Ovary (tissue), 10 donors: ENCODE measurements at regions of chr17 and their contacts with region 1.

Region 1: GRCh38 chr17:40909351-40909750 is 24.3 kb upstream of the KRT20 start:
- DNase-seq: peak; percentile 64 to 84 (median 80)
- H3K4me3 ChIP-seq: no peak overlapping the region
- H3K27ac ChIP-seq: no peak overlapping the region
- H3K4me1 ChIP-seq: no peaks in the 10 kb centered on the region
- H3K27me3 ChIP-seq: no peaks in the 10 kb centered on the region
- CTCF ChIP-seq: peak; percentile 48 to 80 (median 69)
- EP300 ChIP-seq: no peak
- POLR2A ChIP-seq: no peak

Region 2: DNA sequence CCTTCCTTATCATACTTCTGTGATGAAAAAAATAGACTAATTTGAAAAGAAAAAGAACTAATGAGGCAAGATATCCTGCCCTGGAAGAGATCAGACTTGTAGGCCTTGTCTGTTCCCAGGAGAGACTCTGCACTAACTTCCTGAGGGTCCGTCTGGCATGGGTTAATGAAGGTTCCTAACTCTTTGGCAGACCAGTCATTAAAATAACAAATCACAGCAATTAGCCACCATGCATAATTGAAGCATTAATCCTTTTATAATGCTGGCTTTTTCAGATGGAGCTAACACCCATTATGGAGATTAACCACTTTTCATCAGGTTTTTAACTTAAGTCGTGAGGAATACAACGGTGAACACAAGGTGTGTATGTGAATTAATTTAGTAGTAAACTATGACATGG is 76.5 kb before region 1 on chr17:
- intact Hi-C with region 1: no loop called
- DNase-seq: no peak
- H3K4me3 ChIP-seq: no peak overlapping the region
- H3K27ac ChIP-seq: no peak overlapping the region
- H3K4me1 ChIP-seq: no peaks in the 10 kb centered on the region
- H3K27me3 ChIP-seq: no peaks in the 10 kb centered on the region
- CTCF ChIP-seq: no peak
- EP300 ChIP-seq: no peak
- POLR2A ChIP-seq: no peak

Region 3: GRCh38 chr17:41392278-41392677 is 482.9 kb after region 1 on chr17:
- intact Hi-C with region 1: loop called in 1 of 4 experiments (anchors 10 kb)
- DNase-seq: no peak
- H3K4me3 ChIP-seq: no peak overlapping the region
- H3K27ac ChIP-seq: no peak overlapping the region
- H3K4me1 ChIP-seq: peaks cover 14% of the 10 kb centered on the region
- H3K27me3 ChIP-seq: no peaks in the 10 kb centered on the region
- CTCF ChIP-seq: no peak
- EP300 ChIP-seq: no peak
- POLR2A ChIP-seq: no peak

Region 4: DNA sequence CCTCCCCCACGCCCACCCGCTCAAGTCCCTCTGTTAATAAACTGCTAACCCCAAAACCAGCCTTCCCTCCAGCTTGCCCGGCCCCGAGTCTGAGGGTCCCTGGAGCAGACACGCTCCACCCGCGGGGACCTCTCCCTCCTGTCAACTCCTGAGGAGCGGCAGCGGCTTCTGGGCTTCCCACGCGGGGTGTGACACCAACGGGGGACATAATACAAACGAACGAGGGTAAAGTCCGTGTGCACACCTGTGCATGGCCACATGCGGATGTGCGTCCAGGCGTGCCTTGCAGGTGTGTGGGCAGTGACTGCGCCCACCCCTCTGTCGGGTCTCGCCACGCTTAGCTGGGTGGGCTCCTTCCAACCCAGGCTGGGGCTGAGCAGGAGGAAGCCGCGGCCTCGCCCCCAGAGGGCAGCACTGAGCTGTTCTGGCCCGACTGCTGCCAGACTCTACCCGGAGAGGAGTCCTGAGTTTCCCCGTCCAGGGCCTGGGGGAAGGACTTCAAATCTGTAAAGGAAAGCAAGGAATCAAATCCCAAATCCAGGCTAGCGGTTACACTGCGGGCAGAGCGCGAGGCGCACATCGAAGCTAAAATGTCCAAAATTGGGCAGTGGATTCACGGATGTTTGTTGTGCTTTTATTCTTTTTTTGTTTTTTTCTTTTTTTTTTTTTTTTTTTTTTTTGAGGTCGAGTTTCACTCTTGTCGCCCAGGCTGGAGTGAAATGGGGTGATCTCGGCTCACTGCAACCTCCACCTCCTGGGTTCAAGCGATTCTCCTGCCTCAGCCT is 739.3 kb after region 1 on chr17:
- intact Hi-C with region 1: loop called in 2 of 4 experiments (anchors 5 to 10 kb)
- DNase-seq: peak; percentile 79 to 92 (median 90)
- H3K4me3 ChIP-seq: peak overlapping the region; percentile 33
- H3K27ac ChIP-seq: no peak overlapping the region
- H3K4me1 ChIP-seq: peaks cover 4% of the 10 kb centered on the region
- H3K27me3 ChIP-seq: no peaks in the 10 kb centered on the region
- CTCF ChIP-seq: peak; percentile 91 to 97 (median 94)
- EP300 ChIP-seq: no peak
- POLR2A ChIP-seq: no peak

Region 5: GRCh38 chr17:41655611-41656351 is 746.4 kb after region 1 on chr17:
- intact Hi-C with region 1: loop called (anchors 5 kb)
- DNase-seq: peak in 1 of 5 donors; percentile 71
- H3K4me3 ChIP-seq: no peak overlapping the region
- H3K27ac ChIP-seq: no peak overlapping the region
- H3K4me1 ChIP-seq: no peaks in the 10 kb centered on the region
- H3K27me3 ChIP-seq: no peaks in the 10 kb centered on the region
- CTCF ChIP-seq: no peak
- EP300 ChIP-seq: no peak
- POLR2A ChIP-seq: no peak

Region 6: DNA sequence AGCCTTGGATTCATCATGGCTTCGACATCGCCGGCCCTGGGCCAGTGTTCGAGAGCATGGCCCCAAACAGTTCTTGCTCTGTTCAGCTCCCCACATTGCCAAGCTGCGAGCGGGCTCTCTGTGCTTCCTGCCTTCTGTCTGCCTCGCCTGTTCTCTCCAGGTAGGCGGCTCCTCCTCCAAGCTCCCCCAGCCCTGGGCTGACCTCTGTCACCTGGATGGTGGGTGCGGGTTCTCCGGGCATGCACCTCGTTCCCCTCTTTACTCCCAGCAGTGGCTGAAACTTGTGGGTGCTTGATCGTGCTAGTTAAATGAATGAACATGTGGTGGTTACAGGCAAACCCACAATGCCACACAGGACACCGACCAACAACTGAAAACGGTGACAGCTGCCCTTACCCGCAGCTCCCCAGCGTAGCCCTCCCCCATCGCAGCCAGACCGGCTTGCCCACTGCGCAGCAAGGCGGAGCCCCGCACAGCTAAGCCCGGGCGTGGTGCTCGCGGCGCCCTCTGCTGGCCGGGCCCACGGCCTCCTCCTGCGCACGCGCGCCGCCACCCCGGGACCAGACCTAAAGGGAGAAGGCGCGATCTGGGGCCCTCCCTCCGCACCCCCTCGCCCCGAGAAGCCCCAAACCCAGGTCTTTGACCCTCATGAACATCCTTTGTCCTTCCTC is 756.4 kb after region 1 on chr17:
- intact Hi-C with region 1: loop called in 2 of 4 experiments (anchors 5 kb)
- DNase-seq: peak; percentile 82 to 92 (median 86)
- H3K4me3 ChIP-seq: peak overlapping the region; percentile 40
- H3K27ac ChIP-seq: peak overlapping the region; percentile 38 to 42
- H3K4me1 ChIP-seq: no peaks in the 10 kb centered on the region
- H3K27me3 ChIP-seq: no peaks in the 10 kb centered on the region
- CTCF ChIP-seq: peak; percentile 94 to 97 (median 95)
- EP300 ChIP-seq: no peak
- POLR2A ChIP-seq: peak; percentile 44